Activated CD4-positive, alpha-beta memory T cell treated with anti-CD3 and anti-CD28 coated beads for 36 hours (primary cell): ENCODE measurements at regions of chr18 and their contacts with region 1.

Region 1: DNA sequence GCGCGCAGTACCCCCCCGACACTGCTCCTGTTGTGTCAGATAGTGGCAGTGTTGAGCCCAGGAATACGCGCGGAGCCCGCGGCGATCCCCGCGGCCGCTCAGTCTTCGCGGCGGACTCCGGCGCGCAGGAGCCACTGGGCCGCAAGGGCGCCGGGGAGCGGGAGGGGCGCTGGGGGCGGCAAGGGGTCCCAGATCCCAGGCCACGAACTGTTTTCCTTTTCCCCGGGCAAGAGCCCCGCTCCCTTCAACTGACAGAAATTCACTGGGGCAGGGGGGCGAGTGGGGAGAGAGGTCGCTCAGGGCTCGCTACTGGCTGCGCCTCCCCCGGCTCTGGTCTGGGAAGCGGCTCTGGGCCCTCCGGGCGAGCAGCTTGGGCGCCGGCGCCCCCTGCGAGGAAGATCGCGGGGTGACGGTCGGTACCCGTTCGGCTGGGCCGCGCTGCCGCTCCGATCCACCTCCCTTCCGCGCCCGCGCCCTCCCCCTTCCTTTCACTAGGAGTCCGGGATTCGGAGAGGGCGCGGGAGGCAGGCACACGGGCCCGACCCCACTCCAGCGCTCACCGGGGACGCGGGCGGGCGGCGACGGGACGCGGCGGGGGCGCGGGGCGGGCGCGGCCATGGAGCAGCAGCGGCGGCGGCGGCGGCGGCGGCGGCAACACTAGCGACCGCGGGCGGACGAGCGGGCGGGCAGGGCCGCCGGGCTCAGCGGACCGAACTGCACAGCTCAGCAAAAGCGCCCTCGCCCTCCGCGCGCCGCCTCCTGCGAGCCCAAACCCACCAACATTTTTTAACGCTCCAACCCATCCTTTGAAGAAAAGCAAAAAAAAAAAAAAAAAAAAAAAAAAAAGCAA is 1.4 kb upstream of the SETBP1 start:
- DNase-seq: peak; percentile 84
- H3K4me3 Mint-ChIP-seq: peak overlapping the region; percentile 37
- H3K27ac Mint-ChIP-seq: peak overlapping the region; percentile 18
- H3K4me1 Mint-ChIP-seq: peaks cover 9% of the 10 kb centered on the region
- H3K27me3 Mint-ChIP-seq: peaks cover 26% of the 10 kb centered on the region

Region 2: DNA sequence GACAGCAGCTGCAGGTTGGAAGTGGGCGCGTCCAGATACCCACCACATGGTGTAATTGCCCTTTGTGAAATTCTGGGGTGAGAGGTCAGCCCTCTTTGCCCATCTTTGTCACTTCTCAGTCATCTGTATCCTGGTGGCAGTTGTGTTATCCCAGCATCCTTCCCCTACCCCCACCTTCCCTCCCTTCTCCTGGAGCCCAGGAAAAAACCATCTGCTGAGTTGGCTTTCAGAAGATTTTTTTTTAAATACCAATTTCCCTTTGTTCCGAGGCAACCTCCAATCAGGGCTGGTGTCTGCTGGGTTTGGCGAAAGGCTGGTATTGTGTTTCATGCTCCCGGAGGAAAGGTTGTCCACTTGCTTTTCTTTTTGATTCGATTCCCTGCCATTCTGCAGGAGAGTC is 36.6 kb after region 1 on chr18:
- CTCF ChIA-PET with region 1: interaction called, 3 read pairs
- POLR2A ChIA-PET with region 1: interaction called, 6 read pairs
- intact Hi-C with region 1: loop called (anchors 2 kb)
- DNase-seq: no peak
- H3K4me3 Mint-ChIP-seq: no peak overlapping the region
- H3K27ac Mint-ChIP-seq: no peak overlapping the region
- H3K4me1 Mint-ChIP-seq: peaks cover 21% of the 10 kb centered on the region
- H3K27me3 Mint-ChIP-seq: peaks cover 7% of the 10 kb centered on the region

Region 3: GRCh38 chr18:44758861-44759631 is 79.8 kb after region 1 on chr18:
- CTCF ChIA-PET with region 1: interaction called, 12 read pairs
- POLR2A ChIA-PET with region 1: interaction called, 15 read pairs
- intact Hi-C with region 1: loop called (anchors 1 kb)
- DNase-seq: peak; percentile 78
- H3K4me3 Mint-ChIP-seq: peak overlapping the region; percentile 27
- H3K27ac Mint-ChIP-seq: peak overlapping the region; percentile 87
- H3K4me1 Mint-ChIP-seq: peaks cover 26% of the 10 kb centered on the region
- H3K27me3 Mint-ChIP-seq: peaks cover 3% of the 10 kb centered on the region

Region 4: DNA sequence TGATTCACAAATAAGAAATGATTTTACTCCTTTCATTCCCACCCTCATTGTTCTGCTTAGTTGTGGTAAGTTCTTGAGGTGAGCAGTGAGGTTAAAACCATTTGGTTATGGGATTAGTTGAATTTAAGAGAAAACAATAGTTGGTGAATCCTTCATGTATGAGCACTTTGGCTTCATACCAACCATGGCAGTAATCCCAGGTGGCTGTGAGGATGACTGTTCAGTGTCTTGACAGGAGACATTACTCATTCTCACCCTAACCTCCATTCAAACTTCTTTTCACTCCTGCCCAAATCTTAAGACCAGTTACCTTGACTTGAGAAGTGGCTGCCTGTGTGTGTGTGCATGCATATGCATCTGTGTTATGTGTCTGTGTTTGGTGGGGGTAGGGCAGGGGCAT is 144.5 kb after region 1 on chr18:
- CTCF ChIA-PET with region 1: no interaction called
- POLR2A ChIA-PET with region 1: no interaction called
- intact Hi-C with region 1: loop called (anchors 5 kb)
- DNase-seq: peak; percentile 28
- H3K4me3 Mint-ChIP-seq: no peak overlapping the region
- H3K27ac Mint-ChIP-seq: no peak overlapping the region
- H3K4me1 Mint-ChIP-seq: peaks cover 16% of the 10 kb centered on the region
- H3K27me3 Mint-ChIP-seq: peaks cover 20% of the 10 kb centered on the region

Region 5: DNA sequence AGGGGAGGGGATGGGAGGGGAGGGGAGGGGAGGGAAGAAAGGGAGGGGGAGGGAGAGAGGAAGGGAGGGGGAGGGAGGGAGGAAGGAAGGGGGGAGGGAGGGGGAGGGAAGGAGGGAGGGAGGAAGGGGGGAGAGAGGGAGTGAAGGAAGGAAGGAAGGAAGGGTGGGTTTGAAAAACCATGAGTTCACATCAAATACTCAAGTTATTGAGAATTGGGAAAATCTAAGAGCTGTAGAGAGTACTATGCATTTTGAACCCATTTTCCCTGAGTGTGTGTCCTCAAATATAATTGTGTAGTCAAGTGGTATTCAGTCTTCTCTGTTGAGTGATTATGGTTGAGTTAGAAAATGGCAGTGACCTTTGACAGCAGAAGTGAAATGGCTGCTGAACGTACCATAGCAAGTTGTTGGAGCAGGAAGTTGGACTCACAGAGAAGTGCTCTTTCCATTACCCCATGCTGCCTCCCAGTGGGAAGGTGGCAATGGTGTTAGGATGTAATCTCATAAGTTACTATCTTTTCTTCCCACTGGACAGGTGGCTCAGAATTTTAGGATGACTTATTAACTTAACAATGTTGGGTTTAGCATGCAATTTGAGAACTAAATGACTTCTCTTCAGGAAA is 216.0 kb after region 1 on chr18:
- CTCF ChIA-PET with region 1: interaction called, 11 read pairs
- POLR2A ChIA-PET with region 1: interaction called, 16 read pairs
- intact Hi-C with region 1: loop called (anchors 1 kb)
- DNase-seq: peak; percentile 62
- H3K4me3 Mint-ChIP-seq: no peak overlapping the region
- H3K27ac Mint-ChIP-seq: no peak overlapping the region
- H3K4me1 Mint-ChIP-seq: peaks cover 43% of the 10 kb centered on the region
- H3K27me3 Mint-ChIP-seq: no peaks in the 10 kb centered on the region

Region 6: DNA sequence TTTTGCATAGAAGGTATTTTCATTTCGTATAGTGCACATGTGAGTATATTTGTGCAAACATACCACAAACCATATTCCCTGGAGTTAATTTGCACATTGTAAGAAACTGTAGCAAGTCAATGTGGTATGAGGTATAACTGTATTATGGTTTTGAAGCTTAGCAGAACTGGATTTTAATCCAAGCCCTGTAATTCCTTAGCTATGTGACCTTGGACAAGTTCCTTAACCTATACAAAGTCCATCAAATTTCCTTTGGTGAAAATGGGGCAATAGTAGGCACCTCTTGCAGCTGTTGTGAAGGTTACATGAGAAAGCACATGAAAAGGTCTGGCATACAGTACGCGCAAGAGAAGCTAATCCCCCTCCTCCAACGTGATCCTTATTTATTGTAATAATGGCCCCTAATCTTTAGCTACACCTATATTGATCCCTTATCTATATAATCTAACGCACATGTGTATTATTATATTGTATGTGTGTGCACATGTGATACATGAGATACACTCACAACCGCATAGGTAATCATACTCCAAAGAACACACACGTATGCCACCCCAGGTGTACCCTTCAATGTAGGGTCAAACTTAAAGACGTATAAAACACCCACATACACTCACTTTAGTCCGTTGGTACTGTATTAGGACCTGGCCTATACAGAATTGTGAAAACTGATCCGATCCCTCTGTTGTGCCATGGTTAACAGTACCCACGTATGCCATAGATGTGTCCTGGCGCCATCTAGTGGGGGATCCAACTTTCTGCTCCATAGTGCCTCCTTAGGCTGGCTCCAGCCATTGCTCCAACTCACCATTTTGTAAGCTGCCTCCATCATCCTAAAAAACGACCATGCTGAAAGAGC is 533.1 kb after region 1 on chr18:
- CTCF ChIA-PET with region 1: interaction called, 3 read pairs
- POLR2A ChIA-PET with region 1: no interaction called
- intact Hi-C with region 1: loop called (anchors 5 kb)
- DNase-seq: peak; percentile 81
- H3K4me3 Mint-ChIP-seq: no peak overlapping the region
- H3K27ac Mint-ChIP-seq: no peak overlapping the region
- H3K4me1 Mint-ChIP-seq: no peaks in the 10 kb centered on the region
- H3K27me3 Mint-ChIP-seq: peaks cover 11% of the 10 kb centered on the region